ENCODE measurements at regions of chr18 and their contacts with region 1.

Region 1: GRCh38 chr18:63882333-63883141 is 5.0 kb upstream of the SERPINB2 start:
- DNase-seq: peak; percentile 89
- H3K4me3 Mint-ChIP-seq: no peak overlapping the region
- H3K27ac Mint-ChIP-seq: peak overlapping the region; percentile 75
- H3K4me1 Mint-ChIP-seq: peaks cover 34% of the 10 kb centered on the region
- H3K27me3 Mint-ChIP-seq: no peaks in the 10 kb centered on the region
- CTCF ChIP-seq: no peak

Region 2: DNA sequence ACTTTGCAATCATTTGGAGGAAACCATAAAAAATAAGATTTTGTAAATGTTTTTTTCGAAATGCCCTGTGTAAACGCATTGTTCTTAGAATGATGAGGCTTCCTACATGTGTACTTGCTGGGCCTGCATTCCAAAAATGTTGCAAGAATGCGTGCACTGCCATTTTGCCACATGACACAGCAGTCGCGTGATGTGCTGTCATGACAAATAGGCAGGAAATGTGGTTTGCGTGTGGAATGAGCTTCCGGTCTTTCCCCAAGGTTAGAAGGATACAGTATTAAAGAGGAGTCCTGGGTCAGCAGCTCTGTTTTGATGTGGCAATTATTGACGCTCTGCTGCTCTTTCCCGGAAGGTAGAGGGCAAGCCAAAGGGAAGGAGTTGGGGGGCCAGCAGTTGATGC is 13.2 kb before region 1 on chr18:
- CTCF ChIA-PET with region 1: no interaction called
- POLR2A ChIA-PET with region 1: interaction called, 26 read pairs
- intact Hi-C with region 1: no loop called
- DNase-seq: peak; percentile 73
- H3K4me3 Mint-ChIP-seq: peak overlapping the region; percentile 10
- H3K27ac Mint-ChIP-seq: peak overlapping the region; percentile 95
- H3K4me1 Mint-ChIP-seq: peaks cover 32% of the 10 kb centered on the region
- H3K27me3 Mint-ChIP-seq: no peaks in the 10 kb centered on the region
- CTCF ChIP-seq: no peak

Measured in MCF 10A (cell line).